AG04450 (cell line): ENCODE measurements at regions of chr11 and their contacts with region 1.

Region 1: DNA sequence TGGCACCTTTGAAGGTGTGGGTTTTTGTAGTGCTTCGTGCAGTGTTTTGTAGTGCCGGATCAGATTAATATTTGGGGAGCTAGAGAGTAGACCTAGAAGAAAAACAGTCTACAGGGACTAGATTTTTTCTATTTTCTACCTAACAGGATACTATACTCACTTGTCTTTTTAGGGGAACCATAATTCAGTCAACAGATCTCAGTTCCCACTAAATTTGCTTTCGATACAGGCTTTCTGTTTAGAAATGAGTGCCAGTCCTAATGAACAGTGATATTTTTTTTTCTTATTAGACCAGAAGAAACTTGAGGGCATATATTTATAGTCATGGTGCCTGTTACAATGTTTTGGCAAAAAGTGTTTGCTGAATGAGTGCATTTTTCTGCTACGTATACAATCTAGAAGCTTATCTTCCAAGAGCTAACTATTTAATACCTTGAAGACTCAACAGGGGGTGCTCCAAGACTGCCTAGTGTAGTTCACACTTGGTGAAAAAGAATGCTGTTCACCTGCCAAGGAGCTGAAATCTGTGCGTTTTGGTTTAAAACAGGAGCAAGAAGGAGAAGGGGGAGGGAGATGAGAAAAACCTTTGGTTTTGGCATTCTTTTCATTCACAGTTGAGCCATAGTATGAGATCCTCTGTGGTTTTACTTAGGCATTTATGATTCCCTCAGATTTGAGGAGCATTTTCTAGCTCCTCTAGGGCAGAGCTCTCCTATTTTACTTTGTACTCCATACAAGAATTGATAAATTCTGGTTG is 44.9 kb upstream of the VSTM5 start:
- DNase-seq: peak; percentile 69
- H3K4me3 ChIP-seq: no peak overlapping the region; the same call in 1 of the 2 replicates
- H3K27ac ChIP-seq: no peak overlapping the region
- H3K27me3 ChIP-seq: peaks cover 7% of the 10 kb centered on the region
- CTCF ChIP-seq: peak; percentile 89

Region 2: DNA sequence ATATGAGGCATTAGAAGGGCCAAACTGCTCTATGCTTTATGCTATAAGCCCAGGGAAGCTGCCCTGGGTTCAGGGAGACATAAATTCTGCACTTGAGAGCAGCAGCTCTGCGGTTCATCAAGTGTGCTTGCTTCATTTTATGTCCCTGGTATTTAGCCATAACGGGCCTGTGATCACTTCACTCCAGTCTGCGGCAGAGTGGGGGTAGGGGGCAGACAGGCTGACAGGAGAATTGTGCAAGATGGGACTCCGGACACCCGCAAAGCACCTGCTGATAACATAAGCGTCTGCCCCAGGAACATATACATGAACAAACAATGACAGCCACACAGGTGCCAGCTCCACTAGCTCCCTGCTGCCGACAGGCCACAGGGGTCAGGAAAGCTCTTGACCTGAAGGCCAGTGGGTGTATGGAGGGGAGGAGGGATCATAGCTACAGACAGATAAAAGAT is 408.2 kb before region 1 on chr11:
- CTCF ChIA-PET with region 1: no interaction called
- POLR2A ChIA-PET with region 1: no interaction called
- DNase-seq: no peak
- H3K4me3 ChIP-seq: no peak overlapping the region
- H3K27ac ChIP-seq: no peak overlapping the region
- H3K27me3 ChIP-seq: no peaks in the 10 kb centered on the region
- CTCF ChIP-seq: no peak

Region 3: GRCh38 chr11:93875637-93876036 is 19.6 kb before region 1 on chr11:
- CTCF ChIA-PET with region 1: interaction called, 13 read pairs
- POLR2A ChIA-PET with region 1: no interaction called
- DNase-seq: no peak
- H3K4me3 ChIP-seq: no peak overlapping the region
- H3K27ac ChIP-seq: no peak overlapping the region
- H3K27me3 ChIP-seq: no peaks in the 10 kb centered on the region
- CTCF ChIP-seq: no peak

Region 4: GRCh38 chr11:94128746-94129511 is 233.6 kb after region 1 on chr11 and contains the start of gene PANX1:
- CTCF ChIA-PET with region 1: interaction called, 14 read pairs
- POLR2A ChIA-PET with region 1: no interaction called
- DNase-seq: peak; percentile 47
- H3K4me3 ChIP-seq: peak within 1 kb of the TSS; percentile 96
- H3K27ac ChIP-seq: peak within 1 kb of the TSS; percentile 98
- H3K27me3 ChIP-seq: no peaks in the 10 kb centered on the region
- CTCF ChIP-seq: no peak
- polyA plus RNA-seq, gene PANX1: 51.2 and 52.9 TPM in 2 replicates

Region 5: DNA sequence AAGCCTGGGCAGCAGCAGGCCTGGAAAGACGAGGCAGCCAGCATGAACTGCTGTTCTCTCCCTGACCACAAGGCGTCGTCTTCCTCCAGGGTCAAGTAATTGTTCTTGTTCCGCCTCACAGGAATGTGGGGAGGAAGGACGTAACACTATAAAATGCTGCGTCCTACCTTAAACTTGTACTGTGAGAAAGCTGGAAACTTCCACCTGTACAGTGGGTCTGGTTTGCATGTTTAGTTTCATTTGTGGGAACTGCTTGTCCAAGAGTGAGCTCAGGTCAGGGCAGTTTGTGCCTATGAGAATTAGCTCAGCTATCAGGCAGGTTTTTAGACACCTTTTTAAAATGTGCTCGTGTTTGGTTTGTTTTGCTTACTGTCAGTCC is 288.6 kb after region 1 on chr11:
- CTCF ChIA-PET with region 1: interaction called, 61 read pairs
- POLR2A ChIA-PET with region 1: no interaction called
- DNase-seq: no peak
- H3K4me3 ChIP-seq: no peak overlapping the region
- H3K27ac ChIP-seq: no peak overlapping the region
- H3K27me3 ChIP-seq: no peaks in the 10 kb centered on the region
- CTCF ChIP-seq: peak; percentile 76

Region 6: GRCh38 chr11:94450048-94450447 is 554.8 kb after region 1 on chr11:
- CTCF ChIA-PET with region 1: interaction called, 10 read pairs
- POLR2A ChIA-PET with region 1: no interaction called
- DNase-seq: no peak
- H3K4me3 ChIP-seq: no peak overlapping the region
- H3K27ac ChIP-seq: no peak overlapping the region
- H3K27me3 ChIP-seq: no peaks in the 10 kb centered on the region
- CTCF ChIP-seq: no peak

Region 7: DNA sequence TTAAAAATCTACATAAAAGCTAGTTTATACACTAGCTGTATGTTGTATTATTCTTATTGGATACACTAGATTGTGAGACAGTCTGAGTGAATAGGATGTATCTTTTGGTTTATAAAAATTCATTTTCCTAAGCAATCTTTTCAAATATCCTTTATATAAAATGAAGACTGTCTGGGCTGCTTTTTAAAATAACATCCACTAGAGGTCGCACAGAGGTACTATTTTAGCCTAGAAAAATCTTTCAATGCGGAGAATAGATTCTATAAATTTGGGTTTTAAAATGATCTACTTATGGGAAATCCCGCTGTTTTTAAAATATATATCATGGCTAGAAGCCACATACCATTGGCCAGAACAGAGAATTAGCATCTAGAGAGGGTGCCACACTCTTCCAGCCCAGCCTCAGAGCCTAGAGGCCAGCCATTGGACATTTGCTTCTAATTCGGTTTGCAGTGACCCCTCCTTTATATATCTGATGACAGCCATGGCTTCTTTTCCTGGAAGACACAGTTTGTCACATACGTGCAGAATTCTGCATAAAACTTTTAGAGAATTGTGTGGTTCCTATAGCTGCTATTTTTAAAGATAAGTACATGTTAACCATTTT is 624.3 kb after region 1 on chr11:
- CTCF ChIA-PET with region 1: interaction called, 24 read pairs
- POLR2A ChIA-PET with region 1: no interaction called
- DNase-seq: no peak
- H3K4me3 ChIP-seq: no peak overlapping the region
- H3K27ac ChIP-seq: no peak overlapping the region
- H3K27me3 ChIP-seq: peaks cover 16% of the 10 kb centered on the region
- CTCF ChIP-seq: peak; percentile 65

Region 8: DNA sequence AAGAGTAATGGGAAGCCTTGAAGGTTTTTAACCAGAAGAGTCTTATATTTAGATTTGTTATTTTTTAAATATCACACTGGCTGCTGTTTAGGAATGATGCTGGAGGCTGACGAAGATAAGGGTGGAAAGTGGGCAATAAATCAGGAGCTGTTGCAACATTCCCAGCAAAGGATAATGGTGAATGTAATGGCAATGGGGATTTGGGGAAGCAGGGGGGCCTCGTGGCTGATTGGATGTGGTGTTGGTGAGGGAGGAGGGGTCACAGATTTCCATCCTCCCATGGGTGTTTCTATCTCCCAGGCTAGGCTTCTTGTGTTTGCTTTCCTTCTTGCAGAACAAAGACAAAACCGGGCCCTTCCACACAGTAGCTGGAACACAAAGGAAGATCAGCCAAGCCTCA is 752.6 kb after region 1 on chr11:
- CTCF ChIA-PET with region 1: no interaction called
- POLR2A ChIA-PET with region 1: no interaction called
- DNase-seq: no peak
- H3K4me3 ChIP-seq: no peak overlapping the region
- H3K27ac ChIP-seq: no peak overlapping the region
- H3K27me3 ChIP-seq: peaks cover 2% of the 10 kb centered on the region
- CTCF ChIP-seq: no peak